Gastrocnemius medialis (tissue), 4 donors: ENCODE measurements at regions of chr10 and their contacts with region 1.

Region 1: GRCh38 chr10:100373298-100374136 is 26.5 kb downstream of the SCD start:
- DNase-seq: peak; percentile 98 to 99
- ATAC-seq: peak; percentile 77 to 80
- H3K4me3 ChIP-seq: peak overlapping the region; percentile 66 to 76 (median 74)
- H3K27ac ChIP-seq: peak overlapping the region; percentile 97 to 99 (median 97)
- H3K4me1 ChIP-seq: peaks cover 42 to 45% of the 10 kb centered on the region in 2 donors
- H3K27me3 ChIP-seq: no peaks in the 10 kb centered on the region
- CTCF ChIP-seq: no peak
- POLR2A ChIP-seq: peak; percentile 45 to 85

Region 2: DNA sequence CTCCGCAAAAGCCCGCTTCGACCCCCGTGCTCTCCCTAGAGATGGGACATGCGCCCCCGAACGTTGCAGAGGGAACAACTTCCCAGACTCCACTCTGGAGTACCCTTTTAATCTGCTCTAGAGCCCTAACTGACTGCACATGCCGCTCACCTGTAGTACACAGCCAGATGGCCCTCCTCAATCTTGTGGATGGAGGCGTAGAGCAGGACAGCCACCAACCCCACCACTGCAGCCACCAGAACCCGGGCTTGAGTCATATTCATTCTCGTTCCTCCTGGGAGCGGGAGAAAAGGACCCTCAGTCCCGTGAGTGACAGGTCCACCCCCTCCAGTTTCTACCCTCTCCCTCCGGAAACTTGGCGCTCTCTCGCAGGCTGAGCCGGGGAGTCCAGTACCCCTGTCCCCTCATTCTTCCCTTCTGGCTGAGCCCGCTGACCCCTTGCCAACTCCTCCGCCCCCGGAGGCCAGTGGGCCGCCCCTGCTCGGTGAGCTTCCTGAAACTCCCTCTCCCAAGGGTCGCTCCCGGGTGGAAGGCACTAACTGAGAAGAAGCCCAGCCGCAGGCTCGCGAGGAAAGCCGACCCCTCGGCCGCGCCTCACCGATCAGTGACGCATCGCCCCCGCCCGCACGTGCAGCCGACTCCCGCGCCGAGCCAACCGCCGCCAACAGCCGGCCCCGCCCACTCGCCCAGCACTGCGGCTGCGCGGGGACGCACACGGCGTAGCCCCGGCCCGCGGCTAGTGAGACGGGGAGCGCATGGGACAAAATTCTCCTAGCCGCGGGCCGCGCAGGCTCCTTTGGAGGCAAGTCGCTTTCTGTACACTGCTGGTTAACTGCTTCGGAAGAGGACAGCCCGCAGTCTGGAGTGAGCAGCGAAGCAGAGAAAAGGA is 187.9 kb before region 1 on chr10 and contains the start of gene ERLIN1:
- in situ Hi-C with region 1: no loop called
- intact Hi-C with region 1: loop called (anchors 5 kb)
- DNase-seq: peak; percentile 85 to 88
- ATAC-seq: peak; percentile 95
- H3K4me3 ChIP-seq: peak within 1 kb of the TSS; percentile 78 to 94 (median 90)
- H3K27ac ChIP-seq: peak within 1 kb of the TSS; percentile 94 to 99 (median 95)
- H3K4me1 ChIP-seq: peaks cover 15 to 35% of the 10 kb centered on the region in 2 donors
- H3K27me3 ChIP-seq: no peaks in the 10 kb centered on the region
- CTCF ChIP-seq: no peak
- POLR2A ChIP-seq: peak; percentile 81 to 83
- total RNA-seq, gene ERLIN1: 5.3 to 8.5 (median 7.3) TPM

Region 3: DNA sequence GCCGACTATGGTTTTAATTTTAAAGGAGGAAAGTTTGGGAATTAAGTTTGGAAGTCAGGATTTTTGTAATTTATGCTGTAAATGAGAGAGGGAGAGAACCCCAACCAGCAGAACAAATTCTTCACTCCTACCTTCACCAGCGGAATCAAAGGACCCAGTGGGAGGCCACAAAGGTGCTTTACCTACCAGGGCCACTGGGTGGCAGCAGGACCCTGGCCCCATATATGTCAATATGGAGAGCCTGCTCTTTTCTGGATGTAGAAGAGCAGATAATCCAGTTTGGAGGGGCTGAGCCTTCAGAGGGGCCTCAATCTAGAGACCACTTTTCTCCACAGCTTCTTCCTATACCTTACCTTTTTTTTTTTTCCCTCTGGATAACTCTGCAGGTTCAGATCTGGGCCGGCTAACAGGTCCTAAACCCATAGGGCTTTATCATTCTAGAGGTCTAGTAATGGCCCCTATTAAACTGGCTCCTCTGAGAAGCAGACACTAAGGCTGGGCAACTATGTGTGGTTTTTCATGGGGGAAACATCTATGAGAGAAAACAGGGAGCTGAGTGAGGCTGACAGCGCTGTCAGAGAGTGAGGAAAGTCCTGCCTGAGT is 35.0 kb before region 1 on chr10:
- in situ Hi-C with region 1: no loop called
- intact Hi-C with region 1: loop called (anchors 2 kb)
- DNase-seq: peak; percentile 50 to 71
- ATAC-seq: peak; percentile 25 to 40
- H3K4me3 ChIP-seq: no peak overlapping the region
- H3K27ac ChIP-seq: no peak overlapping the region
- H3K4me1 ChIP-seq: peaks cover 20% of the 10 kb centered on the region in 2 donors
- H3K27me3 ChIP-seq: no peaks in the 10 kb centered on the region
- CTCF ChIP-seq: peak; percentile 90 to 96 (median 94)
- POLR2A ChIP-seq: no peak

Region 4: DNA sequence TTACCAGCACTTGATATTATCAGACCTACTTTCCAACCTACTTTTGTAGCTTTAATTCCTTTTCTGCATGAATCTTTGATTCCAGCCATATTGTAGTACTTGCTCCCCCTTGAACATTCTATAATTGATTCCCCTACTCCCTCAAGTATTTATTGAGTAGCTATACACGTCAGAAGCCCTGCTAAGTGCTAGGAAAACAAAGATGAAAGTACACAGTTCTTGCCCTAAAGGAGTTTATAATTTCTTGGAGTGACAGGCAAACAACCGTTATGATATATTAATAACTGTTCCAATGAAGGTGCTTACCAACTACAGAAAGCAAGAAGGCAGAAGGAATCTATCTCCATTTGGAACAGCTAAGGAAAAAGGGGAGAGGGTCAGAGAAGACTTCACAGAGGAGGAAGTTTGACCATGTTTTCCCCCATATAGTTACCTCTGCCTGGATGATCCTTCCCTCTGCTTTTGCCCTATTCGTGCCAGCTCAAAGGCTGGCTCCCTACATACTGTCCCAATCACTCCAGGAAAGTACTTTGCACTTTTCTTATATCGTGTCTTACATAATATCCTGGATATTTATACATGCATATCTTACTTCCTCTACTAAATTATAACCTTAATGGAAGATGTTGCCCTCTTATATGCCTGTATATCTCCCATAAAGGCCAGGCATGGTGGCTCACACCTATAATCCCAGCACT is 28.3 kb after region 1 on chr10:
- in situ Hi-C with region 1: no loop called
- intact Hi-C with region 1: no loop called
- DNase-seq: no peak
- ATAC-seq: no peak
- H3K4me3 ChIP-seq: no peak overlapping the region
- H3K27ac ChIP-seq: no peak overlapping the region
- H3K4me1 ChIP-seq: no peaks in the 10 kb centered on the region
- H3K27me3 ChIP-seq: no peaks in the 10 kb centered on the region
- CTCF ChIP-seq: no peak
- POLR2A ChIP-seq: no peak

Region 5: GRCh38 chr10:100518761-100519241 is 145.3 kb after region 1 on chr10:
- in situ Hi-C with region 1: no loop called
- intact Hi-C with region 1: loop called (anchors 5 kb)
- DNase-seq: peak; percentile 55 to 71
- ATAC-seq: peak; percentile 69 to 75
- H3K4me3 ChIP-seq: peak overlapping the region; percentile 59 to 70 (median 67)
- H3K27ac ChIP-seq: peak overlapping the region; percentile 69 to 82 (median 79)
- H3K4me1 ChIP-seq: peaks cover 27 to 31% of the 10 kb centered on the region in 2 donors
- H3K27me3 ChIP-seq: no peaks in the 10 kb centered on the region
- CTCF ChIP-seq: peak; percentile 55 to 80 (median 70)
- POLR2A ChIP-seq: no peak